Activated CD4-positive, alpha-beta memory T cell treated with anti-CD3 and anti-CD28 coated beads, Interleukin-2, amount 10 ng/mL, durations not matched to agents 7 days and 5 days (primary cell): ENCODE measurements at regions of chr4 and their contacts with region 1.

Region 1: GRCh38 chr4:113593400-113594230 is 167.9 kb downstream of the CAMK2D start:
- DNase-seq: no peak
- H3K4me3 Mint-ChIP-seq: no peak overlapping the region
- H3K27ac Mint-ChIP-seq: no peak overlapping the region
- H3K4me1 Mint-ChIP-seq: peaks cover 14% of the 10 kb centered on the region
- H3K27me3 Mint-ChIP-seq: no peaks in the 10 kb centered on the region

Region 2: GRCh38 chr4:113582737-113583136 is 10.9 kb before region 1 on chr4:
- CTCF ChIA-PET with region 1: interaction called, 10 read pairs
- POLR2A ChIA-PET with region 1: interaction called, 3 read pairs
- DNase-seq: no peak
- H3K4me3 Mint-ChIP-seq: no peak overlapping the region
- H3K27ac Mint-ChIP-seq: no peak overlapping the region
- H3K4me1 Mint-ChIP-seq: peaks cover 8% of the 10 kb centered on the region
- H3K27me3 Mint-ChIP-seq: no peaks in the 10 kb centered on the region